ENCODE measurements at regions of chr15 and their contacts with region 1.

Region 1: GRCh38 chr15:43285609-43286037 is 18.9 kb upstream of the TGM5 start:
- DNase-seq: peak; percentile 89
- ATAC-seq: peak; percentile 80
- H3K4me3 ChIP-seq: 0 out of 2 replicates have a peak overlapping the region, but pooled peaks have one; percentile 24
- H3K27ac ChIP-seq: no peak overlapping the region
- H3K4me1 ChIP-seq: no peaks in the 10 kb centered on the region; the same call in 1 of the 2 replicates
- H3K27me3 ChIP-seq: peaks cover 19% of the 10 kb centered on the region; the same call in 1 of the 2 replicates
- CTCF ChIP-seq: peak; percentile 92

Region 2: DNA sequence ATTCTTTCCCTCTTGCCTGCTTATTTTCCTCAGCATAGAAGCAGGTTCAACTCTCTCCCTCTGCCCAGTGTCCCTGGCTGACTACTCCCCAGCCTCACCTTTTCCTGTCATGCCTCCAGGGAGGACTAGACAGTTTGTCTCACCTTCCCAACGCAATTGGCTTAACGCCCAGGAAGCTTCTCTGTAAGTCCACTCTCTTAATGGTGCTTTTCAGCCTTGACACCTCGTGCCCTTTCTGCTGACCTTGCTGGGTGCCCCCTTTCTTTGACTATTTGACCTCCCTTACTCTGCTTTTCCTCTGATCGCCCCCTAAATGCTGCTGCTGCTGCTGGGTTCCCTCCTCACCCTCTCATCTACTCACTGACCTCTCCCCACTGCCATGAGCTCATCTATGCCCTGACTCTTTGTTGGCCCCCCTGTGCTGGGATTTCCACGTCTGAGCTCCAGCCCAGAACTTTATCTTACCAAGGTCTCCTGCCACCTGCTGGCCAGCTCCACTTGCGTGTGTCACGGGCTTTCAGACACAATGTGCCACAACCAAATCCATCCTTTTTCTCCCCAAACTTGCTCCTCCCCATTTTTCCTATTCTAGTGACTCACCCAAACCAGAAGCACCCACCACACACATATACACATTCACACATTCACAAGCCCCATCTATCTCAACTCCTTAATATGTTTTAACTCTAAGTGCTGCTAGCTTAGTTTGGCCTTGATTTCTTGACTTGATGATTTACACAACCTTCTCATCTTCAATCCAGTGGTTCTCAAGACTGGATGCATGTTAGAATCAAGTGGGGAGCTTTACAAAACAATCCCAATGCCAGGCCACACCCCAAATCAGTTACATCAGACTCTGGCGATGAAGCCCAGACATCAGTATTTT is 81.4 kb before region 1 on chr15:
- CTCF ChIA-PET with region 1: interaction called, 13 read pairs
- POLR2A ChIA-PET with region 1: no interaction called
- intact Hi-C with region 1: no loop called
- DNase-seq: peak; percentile 73
- ATAC-seq: peak; percentile 88
- H3K4me3 ChIP-seq: no peak overlapping the region
- H3K27ac ChIP-seq: no peak overlapping the region
- H3K4me1 ChIP-seq: peaks cover 7% of the 10 kb centered on the region; the same call in 1 of the 2 replicates
- H3K27me3 ChIP-seq: no peaks in the 10 kb centered on the region
- CTCF ChIP-seq: peak; percentile 92

Region 3: GRCh38 chr15:43225201-43225949 is 60.2 kb before region 1 on chr15:
- CTCF ChIA-PET with region 1: interaction called, 58 read pairs
- POLR2A ChIA-PET with region 1: no interaction called
- intact Hi-C with region 1: loop called (anchors 1 kb)
- DNase-seq: peak; percentile 84
- ATAC-seq: peak; percentile 99
- H3K4me3 ChIP-seq: no peak overlapping the region
- H3K27ac ChIP-seq: no peak overlapping the region
- H3K4me1 ChIP-seq: no peaks in the 10 kb centered on the region
- H3K27me3 ChIP-seq: no peaks in the 10 kb centered on the region; the same call in 1 of the 2 replicates
- CTCF ChIP-seq: peak; percentile 93